A673 (cell line): ENCODE measurements at regions of chr10 and their contacts with region 1.

Region 1: DNA sequence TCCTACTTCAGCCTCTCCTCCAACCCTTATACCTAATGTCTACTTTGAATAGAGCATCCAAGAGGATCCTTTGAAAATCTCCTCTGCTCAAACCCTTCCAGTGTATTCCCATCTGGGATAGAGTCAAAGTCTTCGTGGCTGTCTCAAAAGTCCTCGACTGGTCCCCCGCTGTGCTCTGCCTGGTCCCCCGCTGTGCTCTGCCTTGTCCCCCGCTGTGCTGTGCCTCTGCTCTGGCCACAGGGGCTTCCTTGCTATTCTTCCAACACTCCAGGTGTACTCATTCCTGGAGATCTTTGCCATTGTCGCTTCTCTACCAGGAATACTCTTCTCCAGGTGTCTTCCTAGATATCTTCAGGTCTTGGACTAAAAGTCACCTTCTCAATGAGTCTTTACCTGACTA is 36.1 kb upstream of the COMMD3 start:
- DNase-seq: peak; percentile 16
- H3K4me3 ChIP-seq: no peak overlapping the region
- H3K27ac ChIP-seq: no peak overlapping the region
- H3K4me1 ChIP-seq: peaks cover 8% of the 10 kb centered on the region
- H3K27me3 ChIP-seq: no peaks in the 10 kb centered on the region
- CTCF ChIP-seq: no peak

Region 2: DNA sequence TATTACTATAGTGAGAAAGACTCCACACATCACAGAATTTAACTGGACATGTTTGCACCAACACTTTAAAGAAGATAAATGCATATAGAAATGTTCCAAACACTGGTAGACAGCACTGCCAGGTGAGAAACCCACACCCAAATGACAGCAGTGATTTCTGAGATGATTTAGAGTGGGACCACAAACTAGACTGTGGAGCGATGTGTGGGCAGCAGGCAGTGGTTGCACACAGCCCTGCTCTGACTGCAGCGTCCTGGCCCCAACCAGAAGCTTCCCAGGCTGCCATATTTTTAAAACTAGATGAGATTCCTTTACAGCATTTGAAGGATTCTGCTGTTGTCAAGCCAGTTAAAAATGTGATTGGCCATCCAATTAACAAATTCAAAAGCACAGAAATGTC is 11.6 kb before region 1 on chr10:
- CTCF ChIA-PET with region 1: no interaction called
- POLR2A ChIA-PET with region 1: no interaction called
- intact Hi-C with region 1: no loop called
- DNase-seq: no peak
- H3K4me3 ChIP-seq: no peak overlapping the region
- H3K27ac ChIP-seq: no peak overlapping the region
- H3K4me1 ChIP-seq: peaks cover 5% of the 10 kb centered on the region
- H3K27me3 ChIP-seq: no peaks in the 10 kb centered on the region
- CTCF ChIP-seq: no peak

Region 3: DNA sequence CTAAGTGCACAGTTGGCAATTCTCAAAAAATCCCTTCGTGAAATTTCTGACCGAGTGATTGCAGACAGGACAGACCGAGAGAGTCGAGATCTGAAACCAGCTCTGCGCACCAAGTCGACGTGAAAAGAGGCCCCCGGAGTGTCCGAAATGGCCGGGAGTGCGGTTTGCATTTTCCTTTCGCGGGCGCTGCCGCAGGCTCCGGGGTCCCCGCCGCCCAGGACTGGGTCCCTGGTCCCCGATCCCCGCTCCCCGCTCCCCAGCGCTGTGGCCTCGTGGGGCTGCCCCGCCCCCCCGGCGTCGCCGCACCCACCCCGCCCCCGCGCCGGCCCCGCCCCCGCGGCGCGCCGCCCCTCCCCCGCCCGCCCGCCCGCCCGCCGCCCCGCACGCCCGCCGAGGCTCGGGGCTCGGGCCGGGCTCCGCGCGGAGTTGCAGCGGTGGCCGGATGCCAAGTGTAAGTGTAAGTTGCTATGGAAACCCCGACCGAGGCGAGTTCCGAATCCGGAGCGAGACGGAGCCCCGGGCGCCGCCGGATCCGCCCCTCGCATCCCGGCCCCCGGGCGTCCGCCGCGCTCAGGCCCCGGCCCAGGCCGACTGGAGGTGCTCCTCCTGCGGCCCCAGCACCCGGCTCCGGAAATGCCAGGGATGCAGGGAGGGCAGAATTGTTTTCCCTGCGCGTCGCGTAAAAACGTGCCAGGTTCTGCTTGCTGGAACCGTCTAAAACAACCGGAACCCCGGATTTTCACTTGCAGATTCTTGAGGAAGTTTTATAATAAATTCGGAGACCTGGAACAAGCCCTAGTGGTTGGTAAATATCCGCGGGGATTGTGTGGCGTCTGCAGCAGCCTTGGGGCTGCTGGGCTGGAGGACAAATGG is 45.4 kb after region 1 on chr10:
- CTCF ChIA-PET with region 1: no interaction called
- POLR2A ChIA-PET with region 1: interaction called, 14 read pairs
- intact Hi-C with region 1: no loop called
- DNase-seq: peak; percentile 84
- H3K4me3 ChIP-seq: peak overlapping the region; percentile 75
- H3K27ac ChIP-seq: peak overlapping the region; percentile 45
- H3K4me1 ChIP-seq: peaks cover 28% of the 10 kb centered on the region
- H3K27me3 ChIP-seq: peaks cover 12% of the 10 kb centered on the region
- CTCF ChIP-seq: no peak